MCF 10A (cell line): ENCODE measurements at regions of chr1 and their contacts with region 1.

Region 1: DNA sequence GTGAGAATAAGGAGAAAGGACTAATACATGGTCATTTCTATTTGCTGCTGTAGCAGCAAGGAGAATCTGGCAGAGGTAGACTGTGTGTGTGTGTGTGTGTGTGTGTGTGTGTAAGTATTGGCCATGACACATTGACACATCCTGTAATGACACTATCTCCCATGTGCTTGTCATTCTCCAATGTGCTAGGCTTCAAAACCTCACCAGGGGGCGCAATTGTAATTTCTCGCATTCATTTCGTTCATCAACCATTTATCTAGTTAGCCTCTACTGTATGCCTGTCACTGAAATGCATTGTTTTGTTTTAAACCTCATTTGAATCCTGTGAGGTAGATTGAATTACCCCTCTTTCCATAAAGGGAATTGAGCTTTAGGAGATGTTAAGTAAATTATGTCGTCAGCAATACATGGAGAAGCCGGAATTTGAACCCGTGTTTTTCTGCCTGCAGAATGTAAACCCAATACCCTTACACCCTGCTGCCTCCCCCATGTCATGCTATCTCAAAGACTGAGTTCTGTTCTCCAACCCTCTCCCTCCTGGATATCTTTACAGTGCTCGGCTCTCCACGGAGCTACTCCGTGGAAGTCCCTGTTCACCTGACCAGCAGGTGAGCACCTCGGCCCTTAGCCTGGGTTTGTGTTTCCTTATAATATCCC is 100.8 kb downstream of the UCK2 start:
- DNase-seq: peak; percentile 82
- H3K4me3 Mint-ChIP-seq: no peak overlapping the region
- H3K27ac Mint-ChIP-seq: no peak overlapping the region
- H3K4me1 Mint-ChIP-seq: no peaks in the 10 kb centered on the region
- H3K27me3 Mint-ChIP-seq: no peaks in the 10 kb centered on the region
- CTCF ChIP-seq: peak; percentile 78

Region 2: DNA sequence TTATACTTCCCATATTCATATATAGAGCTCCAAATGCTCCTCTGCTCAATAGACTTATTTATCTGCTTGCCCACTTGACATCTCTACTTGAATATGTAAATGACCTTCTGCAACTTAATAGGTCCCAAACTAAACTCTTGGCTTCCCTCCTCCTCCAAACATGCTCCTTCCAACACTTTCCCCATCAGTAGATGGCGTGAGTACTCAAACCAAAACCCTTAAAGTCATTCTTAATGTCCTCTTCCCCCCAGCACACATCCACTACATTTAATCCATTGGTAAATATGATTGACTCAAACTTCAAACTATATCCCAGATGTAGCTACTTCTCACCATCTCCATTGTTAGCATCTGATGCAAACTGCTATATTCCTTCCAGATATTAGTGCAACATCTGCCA is 1417.8 kb before region 1 on chr1:
- CTCF ChIA-PET with region 1: no interaction called
- POLR2A ChIA-PET with region 1: no interaction called
- intact Hi-C with region 1: no loop called
- DNase-seq: peak; percentile 28
- H3K4me3 Mint-ChIP-seq: no peak overlapping the region
- H3K27ac Mint-ChIP-seq: no peak overlapping the region
- H3K4me1 Mint-ChIP-seq: no peaks in the 10 kb centered on the region
- H3K27me3 Mint-ChIP-seq: peaks cover 5% of the 10 kb centered on the region
- CTCF ChIP-seq: no peak

Region 3: DNA sequence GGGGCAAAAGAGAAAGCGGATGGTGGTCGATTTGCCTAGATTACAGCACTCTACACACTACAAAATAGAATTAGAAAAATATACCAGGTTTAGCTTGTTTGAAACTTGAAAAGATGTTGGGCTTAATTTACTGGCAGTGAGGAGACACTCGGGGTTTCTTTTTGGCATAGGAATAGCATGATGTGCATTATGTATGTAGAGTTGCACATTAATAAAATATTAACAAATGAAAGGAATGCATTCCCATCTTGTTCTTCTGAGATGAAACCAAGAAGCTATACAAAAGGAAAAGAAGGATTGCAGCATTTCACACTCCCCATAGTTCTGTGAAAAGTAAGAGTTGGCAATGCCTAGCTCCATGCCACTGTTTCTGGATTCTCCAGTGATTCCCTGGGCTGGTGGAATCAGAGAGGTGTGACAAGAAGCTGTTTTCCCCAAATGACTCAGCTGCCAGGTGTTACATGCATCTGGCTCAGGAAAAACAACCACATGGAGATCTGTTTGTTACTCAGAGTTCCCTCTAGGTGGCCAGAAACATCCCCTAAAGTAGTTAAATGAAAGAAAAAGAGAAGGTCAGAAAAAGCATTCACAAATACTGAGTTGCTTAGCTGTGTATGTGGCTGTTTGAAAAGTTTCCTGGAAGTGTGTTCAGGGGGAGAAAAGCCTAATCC is 14.9 kb after region 1 on chr1:
- CTCF ChIA-PET with region 1: interaction called, 35 read pairs
- POLR2A ChIA-PET with region 1: no interaction called
- intact Hi-C with region 1: no loop called
- DNase-seq: peak; percentile 28
- H3K4me3 Mint-ChIP-seq: no peak overlapping the region
- H3K27ac Mint-ChIP-seq: no peak overlapping the region
- H3K4me1 Mint-ChIP-seq: peaks cover 5% of the 10 kb centered on the region
- H3K27me3 Mint-ChIP-seq: peaks cover 46% of the 10 kb centered on the region
- CTCF ChIP-seq: no peak

Region 4: GRCh38 chr1:166166695-166167571 is 238.7 kb after region 1 on chr1 and contains the start of gene FAM78B:
- CTCF ChIA-PET with region 1: interaction called, 4 read pairs
- POLR2A ChIA-PET with region 1: no interaction called
- intact Hi-C with region 1: loop called (anchors 10 kb)
- DNase-seq: peak; percentile 85
- H3K4me3 Mint-ChIP-seq: peak within 1 kb of the TSS; percentile 72
- H3K27ac Mint-ChIP-seq: no peak within 1 kb of the TSS
- H3K4me1 Mint-ChIP-seq: peaks cover 17% of the 10 kb centered on the region
- H3K27me3 Mint-ChIP-seq: peaks cover 26% of the 10 kb centered on the region
- CTCF ChIP-seq: no peak
- total RNA-seq, gene FAM78B: 1.1 and 1.5 TPM in 2 replicates

Region 5: DNA sequence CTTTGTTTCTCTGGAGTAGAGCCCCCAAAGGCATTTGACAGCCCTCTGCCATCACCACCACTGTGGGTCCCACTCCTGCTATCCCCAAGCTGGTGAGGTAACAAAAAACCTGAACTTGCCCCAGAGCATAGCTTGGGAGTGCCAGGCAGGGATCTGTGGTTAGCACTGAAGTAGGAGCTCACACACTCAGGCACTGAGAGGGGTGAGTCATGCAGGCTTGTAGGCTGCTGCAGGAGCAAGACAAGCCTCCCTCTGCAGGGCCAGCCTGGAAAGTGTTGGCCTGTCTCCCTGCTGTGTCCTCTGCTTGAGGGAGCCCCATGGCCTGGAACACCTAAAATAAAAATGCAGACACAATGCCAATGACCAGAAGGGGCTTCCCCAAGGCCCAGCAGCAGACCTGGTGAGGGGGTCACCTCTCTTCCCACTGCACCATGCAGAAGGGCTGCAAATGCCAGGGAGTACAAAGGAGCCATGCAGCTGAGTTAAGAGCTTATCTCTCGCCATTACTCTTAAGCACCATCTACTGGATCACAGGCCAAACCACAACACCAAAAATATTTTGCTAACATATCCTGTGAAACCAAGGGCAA is 802.2 kb after region 1 on chr1:
- CTCF ChIA-PET with region 1: interaction called, 3 read pairs
- POLR2A ChIA-PET with region 1: no interaction called
- intact Hi-C with region 1: loop called (anchors 10 kb)
- DNase-seq: peak; percentile 84
- H3K4me3 Mint-ChIP-seq: no peak overlapping the region
- H3K27ac Mint-ChIP-seq: no peak overlapping the region
- H3K4me1 Mint-ChIP-seq: peaks cover 6% of the 10 kb centered on the region
- H3K27me3 Mint-ChIP-seq: no peaks in the 10 kb centered on the region
- CTCF ChIP-seq: peak; percentile 18